ENCODE measurements at regions of chr5 and their contacts with region 1.

Region 1: DNA sequence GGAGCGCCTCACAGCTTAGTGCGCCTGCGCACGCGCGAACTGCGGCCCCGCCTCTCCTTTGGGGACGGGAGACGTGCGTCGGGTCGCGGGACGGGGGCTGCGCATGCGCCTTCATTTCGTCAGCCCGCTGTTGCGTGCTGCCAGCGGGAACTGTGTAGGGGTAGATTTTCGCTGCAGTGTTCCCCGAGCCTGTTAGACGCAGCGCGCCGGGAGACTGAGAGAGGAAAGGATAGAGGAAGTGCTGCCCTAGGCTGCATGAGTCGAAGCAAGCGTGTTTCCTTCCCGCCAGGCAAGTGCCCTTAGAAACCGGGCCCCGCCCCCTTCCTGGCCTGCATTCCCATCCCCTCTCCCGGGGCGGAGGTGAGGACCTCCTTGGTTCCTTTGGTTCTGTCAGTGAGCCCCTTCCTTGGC is 12.3 kb downstream of the ITGA1 start:
- DNase-seq: peak; percentile 96
- H3K4me3 ChIP-seq: peak overlapping the region; percentile 66 to 90 (median 69)
- H3K27ac ChIP-seq: peak overlapping the region; percentile 57
- H3K4me1 ChIP-seq: peaks cover 25% of the 10 kb centered on the region
- H3K27me3 ChIP-seq: no peaks in the 10 kb centered on the region
- CTCF ChIP-seq: no peak
- POLR2A ChIP-seq: peak; percentile 69

Region 2: DNA sequence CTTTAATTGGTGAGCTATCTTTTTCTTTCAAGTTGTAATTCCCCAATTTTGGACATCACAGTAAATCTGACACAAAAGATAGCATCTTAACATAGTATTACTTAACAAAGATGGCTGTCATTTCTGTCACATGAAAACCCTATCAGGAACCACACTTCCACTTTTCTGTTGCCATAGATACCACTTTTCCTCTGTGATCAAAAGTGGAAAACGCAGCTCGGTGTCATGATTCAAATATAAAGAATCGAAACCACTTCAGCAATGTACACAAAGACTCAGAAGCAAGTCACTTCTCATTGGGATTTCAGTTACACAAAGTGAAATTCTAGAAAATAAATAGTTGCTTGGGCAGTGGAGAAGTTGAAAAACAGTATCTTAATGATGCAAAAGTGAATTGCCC is 537.1 kb before region 1 on chr5:
- CTCF ChIA-PET with region 1: no interaction called
- POLR2A ChIA-PET with region 1: no interaction called
- dilution Hi-C with region 1: no loop called
- intact Hi-C with region 1: no loop called
- DNase-seq: no peak
- H3K4me3 ChIP-seq: no peak overlapping the region
- H3K27ac ChIP-seq: no peak overlapping the region
- H3K4me1 ChIP-seq: no peaks in the 10 kb centered on the region
- H3K27me3 ChIP-seq: no peaks in the 10 kb centered on the region
- CTCF ChIP-seq: no peak
- POLR2A ChIP-seq: no peak

Region 3: GRCh38 chr5:52521236-52521635 is 278.8 kb before region 1 on chr5:
- CTCF ChIA-PET with region 1: no interaction called
- POLR2A ChIA-PET with region 1: no interaction called
- dilution Hi-C with region 1: no loop called
- intact Hi-C with region 1: no loop called
- DNase-seq: no peak
- H3K4me3 ChIP-seq: no peak overlapping the region
- H3K27ac ChIP-seq: no peak overlapping the region
- H3K4me1 ChIP-seq: no peaks in the 10 kb centered on the region
- H3K27me3 ChIP-seq: no peaks in the 10 kb centered on the region
- CTCF ChIP-seq: no peak
- POLR2A ChIP-seq: no peak

Region 4: GRCh38 chr5:52709171-52709925 is 90.6 kb before region 1 on chr5:
- CTCF ChIA-PET with region 1: no interaction called
- POLR2A ChIA-PET with region 1: no interaction called
- dilution Hi-C with region 1: no loop called
- intact Hi-C with region 1: loop called (anchors 5 kb)
- DNase-seq: peak; percentile 31
- H3K4me3 ChIP-seq: no peak overlapping the region
- H3K27ac ChIP-seq: no peak overlapping the region
- H3K4me1 ChIP-seq: peaks cover 25% of the 10 kb centered on the region
- H3K27me3 ChIP-seq: no peaks in the 10 kb centered on the region
- CTCF ChIP-seq: no peak
- POLR2A ChIP-seq: no peak

Region 5: GRCh38 chr5:52787600-52788504 is 12.1 kb before region 1 on chr5 and contains the starts of genes ITGA1 and PELO:
- CTCF ChIA-PET with region 1: interaction called, 9 read pairs
- POLR2A ChIA-PET with region 1: no interaction called
- dilution Hi-C with region 1: no loop called
- intact Hi-C with region 1: loop called (anchors 1 kb)
- DNase-seq: peak; percentile 77
- H3K4me3 ChIP-seq: peak within 1 kb of the TSS; percentile 35 to 80 (median 62)
- H3K27ac ChIP-seq: peak within 1 kb of the TSS; percentile 19
- H3K4me1 ChIP-seq: peaks cover 11% of the 10 kb centered on the region
- H3K27me3 ChIP-seq: no peaks in the 10 kb centered on the region
- CTCF ChIP-seq: peak; percentile 16 to 51
- POLR2A ChIP-seq: no peak
- total RNA-seq, gene ITGA1: 1.9 and 3.3 TPM in 2 replicates
- total RNA-seq, gene PELO: 10.2 and 13.2 TPM in 2 replicates

Region 6: GRCh38 chr5:52837068-52837467 is 37.1 kb after region 1 on chr5:
- CTCF ChIA-PET with region 1: interaction called, 4 read pairs
- POLR2A ChIA-PET with region 1: no interaction called
- dilution Hi-C with region 1: no loop called
- intact Hi-C with region 1: loop called (anchors 2 kb)
- DNase-seq: peak; percentile 76
- H3K4me3 ChIP-seq: peak overlapping the region in 1 of 3 experiments; percentile 44
- H3K27ac ChIP-seq: peak overlapping the region; percentile 48
- H3K4me1 ChIP-seq: peaks cover 20% of the 10 kb centered on the region
- H3K27me3 ChIP-seq: no peaks in the 10 kb centered on the region
- CTCF ChIP-seq: peak in 1 of 2 donors; percentile 2
- POLR2A ChIP-seq: no peak

Region 7: GRCh38 chr5:52893863-52894262 is 93.9 kb after region 1 on chr5:
- CTCF ChIA-PET with region 1: no interaction called
- POLR2A ChIA-PET with region 1: no interaction called
- dilution Hi-C with region 1: no loop called
- intact Hi-C with region 1: no loop called
- DNase-seq: no peak
- H3K4me3 ChIP-seq: no peak overlapping the region
- H3K27ac ChIP-seq: no peak overlapping the region
- H3K4me1 ChIP-seq: peaks cover 5% of the 10 kb centered on the region
- H3K27me3 ChIP-seq: no peaks in the 10 kb centered on the region
- CTCF ChIP-seq: no peak
- POLR2A ChIP-seq: no peak

Region 8: GRCh38 chr5:52915176-52915875 is 115.3 kb after region 1 on chr5:
- CTCF ChIA-PET with region 1: interaction called, 18 read pairs
- POLR2A ChIA-PET with region 1: no interaction called
- dilution Hi-C with region 1: no loop called
- intact Hi-C with region 1: loop called (anchors 1 kb)
- DNase-seq: peak; percentile 88
- H3K4me3 ChIP-seq: peak overlapping the region in 2 of 3 experiments; percentile 12 to 46
- H3K27ac ChIP-seq: no peak overlapping the region
- H3K4me1 ChIP-seq: peaks cover 7% of the 10 kb centered on the region
- H3K27me3 ChIP-seq: no peaks in the 10 kb centered on the region
- CTCF ChIP-seq: peak; percentile 53 to 58
- POLR2A ChIP-seq: no peak

Region 9: GRCh38 chr5:52943285-52943684 is 143.3 kb after region 1 on chr5:
- CTCF ChIA-PET with region 1: no interaction called
- POLR2A ChIA-PET with region 1: no interaction called
- dilution Hi-C with region 1: no loop called
- intact Hi-C with region 1: no loop called
- DNase-seq: peak; percentile 31
- H3K4me3 ChIP-seq: no peak overlapping the region
- H3K27ac ChIP-seq: no peak overlapping the region
- H3K4me1 ChIP-seq: peaks cover 26% of the 10 kb centered on the region
- H3K27me3 ChIP-seq: no peaks in the 10 kb centered on the region
- CTCF ChIP-seq: peak; percentile 23 to 44
- POLR2A ChIP-seq: no peak

Measured in endothelial cell of umbilical vein (primary cell).